Activated T-helper 2 cell treated with anti-CD3 and anti-CD28 coated beads, Interferon-gamma antibody, Interleukin-2, Interleukin-4, amounts not matched to agents 10 μg/mL and 5 μg/mL and 100 μg/mL, durations not matched to agents 14 hours and 24 hours and 36 hours (primary cell): ENCODE measurements at regions of chr14 and their contacts with region 1.

Region 1: DNA sequence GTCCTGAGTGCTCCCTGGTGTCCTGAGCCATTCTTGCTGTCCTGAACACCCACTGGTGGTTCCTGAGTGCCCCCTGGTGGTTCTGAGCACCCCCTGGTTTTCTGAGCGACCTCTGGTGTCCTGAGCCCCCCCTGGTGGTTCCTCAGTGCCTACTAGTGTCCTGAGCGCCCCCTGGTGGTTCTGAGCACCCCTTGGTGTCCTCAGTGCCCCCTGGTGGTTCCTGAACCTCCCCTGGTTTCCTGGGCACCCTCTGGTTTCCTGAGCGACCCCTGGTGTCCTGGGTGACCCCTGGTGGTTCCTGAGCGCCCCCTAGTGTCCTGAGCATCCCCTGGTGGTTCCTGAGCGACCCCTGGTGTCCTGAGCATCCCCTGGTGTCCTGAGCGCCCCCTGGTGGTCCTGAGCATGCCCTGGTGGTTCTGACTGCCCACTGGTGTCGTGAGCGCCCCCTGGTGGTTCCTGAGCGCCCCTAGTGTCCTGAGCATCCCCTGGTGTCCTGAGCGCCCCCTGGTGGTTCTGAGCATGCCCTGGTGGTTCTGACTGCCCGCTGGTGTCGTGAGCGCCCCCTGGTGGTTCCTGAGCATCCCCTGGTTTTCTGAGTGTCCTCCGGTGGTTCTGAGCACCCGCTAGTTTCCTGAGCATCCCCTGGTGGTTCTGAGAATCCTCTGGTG is 473.1 kb downstream of the TMEM121 start:
- DNase-seq: peak; percentile 83
- H3K4me3 Mint-ChIP-seq: peak overlapping the region; percentile 10
- H3K27ac Mint-ChIP-seq: peak overlapping the region; percentile 38
- H3K4me1 Mint-ChIP-seq: peaks cover 37% of the 10 kb centered on the region
- H3K27me3 Mint-ChIP-seq: no peaks in the 10 kb centered on the region

Region 2: GRCh38 chr14:105974902-105975301 is 24.6 kb before region 1 on chr14:
- intact Hi-C with region 1: loop called (anchors 1 kb)
- DNase-seq: no peak
- H3K4me3 Mint-ChIP-seq: no peak overlapping the region
- H3K27ac Mint-ChIP-seq: no peak overlapping the region
- H3K4me1 Mint-ChIP-seq: no peaks in the 10 kb centered on the region
- H3K27me3 Mint-ChIP-seq: peaks cover 12% of the 10 kb centered on the region

Region 3: GRCh38 chr14:106024983-106025604 is 25.6 kb after region 1 on chr14:
- intact Hi-C with region 1: no loop called
- DNase-seq: no peak
- H3K4me3 Mint-ChIP-seq: no peak overlapping the region
- H3K27ac Mint-ChIP-seq: peak overlapping the region; percentile 54
- H3K4me1 Mint-ChIP-seq: peaks cover 53% of the 10 kb centered on the region
- H3K27me3 Mint-ChIP-seq: peaks cover 2% of the 10 kb centered on the region

Region 4: DNA sequence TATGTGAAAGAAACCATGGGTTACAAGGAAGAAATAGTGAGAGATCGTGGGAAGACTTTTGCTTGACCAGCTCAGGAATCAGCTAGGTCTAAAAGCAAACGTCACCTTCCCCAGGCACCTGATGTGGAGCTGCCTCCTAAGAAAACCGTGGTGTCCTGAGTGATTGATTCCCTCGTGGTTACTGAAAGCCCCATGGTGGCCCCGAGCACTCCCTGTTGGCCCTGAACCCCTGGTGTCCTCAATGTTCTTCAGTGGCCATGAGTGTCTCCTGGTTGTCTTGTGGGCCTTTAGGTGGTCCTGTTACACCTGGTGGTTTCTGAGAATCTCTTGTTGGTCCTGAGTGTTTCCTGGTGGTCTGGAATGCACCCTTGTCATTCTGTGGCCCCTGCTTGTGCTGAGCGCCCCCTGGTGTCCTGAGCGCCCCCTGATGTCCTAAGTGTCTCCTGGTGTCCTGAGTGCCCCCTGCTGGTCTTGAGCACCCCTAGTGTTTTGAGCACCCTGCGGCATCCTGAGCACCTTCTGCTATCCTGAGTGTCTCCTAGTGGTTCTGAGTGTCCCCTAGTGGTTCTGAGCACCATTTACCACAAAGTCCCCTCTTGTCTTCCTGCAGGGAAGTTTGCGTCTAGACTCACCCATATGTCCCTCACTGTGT is 45.6 kb after region 1 on chr14:
- intact Hi-C with region 1: loop called (anchors 10 kb)
- DNase-seq: peak; percentile 69
- H3K4me3 Mint-ChIP-seq: no peak overlapping the region
- H3K27ac Mint-ChIP-seq: no peak overlapping the region
- H3K4me1 Mint-ChIP-seq: peaks cover 3% of the 10 kb centered on the region
- H3K27me3 Mint-ChIP-seq: peaks cover 8% of the 10 kb centered on the region